ENCODE measurements at regions of chr7 and their contacts with region 1.

Region 1: DNA sequence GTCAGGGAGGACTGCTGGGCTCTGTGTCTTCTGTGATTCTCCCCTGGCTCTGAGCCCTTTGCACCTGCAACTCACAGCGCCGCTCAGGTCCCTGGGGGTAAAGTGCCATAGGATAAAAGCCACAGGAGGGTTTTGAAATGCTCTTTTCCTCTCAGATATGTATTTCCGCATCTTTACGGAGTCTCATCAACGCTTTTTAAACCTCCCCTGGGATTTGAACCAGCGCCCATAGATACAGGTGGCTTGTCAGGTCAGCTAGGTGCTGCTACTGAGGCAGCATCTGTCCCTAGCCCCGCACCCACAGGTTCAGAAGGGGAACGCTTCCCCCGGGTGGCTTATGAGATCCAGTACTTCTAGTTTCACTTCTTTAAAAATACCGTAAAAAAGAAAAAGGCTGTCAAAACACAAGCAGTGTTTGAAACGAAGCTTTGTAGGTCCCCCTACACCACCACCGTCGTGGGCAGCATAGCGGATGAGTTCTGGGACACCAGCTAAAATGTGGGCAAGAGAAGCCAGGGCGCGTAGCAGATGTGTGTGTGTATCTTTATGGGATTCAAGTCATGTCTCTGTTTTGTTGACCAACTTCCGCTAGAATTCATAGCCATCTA is 173.5 kb downstream of the CUX1 start:
- DNase-seq: no peak
- ATAC-seq: no peak
- H3K4me3 ChIP-seq: no peak overlapping the region
- H3K27ac ChIP-seq: no peak overlapping the region
- H3K4me1 ChIP-seq: peaks cover 7% of the 10 kb centered on the region; the same call in 1 of the 2 replicates
- H3K27me3 ChIP-seq: no peaks in the 10 kb centered on the region
- CTCF ChIP-seq: no peak
- POLR2A ChIP-seq: no peak
- RAD21 ChIP-seq: no peak

Region 2: DNA sequence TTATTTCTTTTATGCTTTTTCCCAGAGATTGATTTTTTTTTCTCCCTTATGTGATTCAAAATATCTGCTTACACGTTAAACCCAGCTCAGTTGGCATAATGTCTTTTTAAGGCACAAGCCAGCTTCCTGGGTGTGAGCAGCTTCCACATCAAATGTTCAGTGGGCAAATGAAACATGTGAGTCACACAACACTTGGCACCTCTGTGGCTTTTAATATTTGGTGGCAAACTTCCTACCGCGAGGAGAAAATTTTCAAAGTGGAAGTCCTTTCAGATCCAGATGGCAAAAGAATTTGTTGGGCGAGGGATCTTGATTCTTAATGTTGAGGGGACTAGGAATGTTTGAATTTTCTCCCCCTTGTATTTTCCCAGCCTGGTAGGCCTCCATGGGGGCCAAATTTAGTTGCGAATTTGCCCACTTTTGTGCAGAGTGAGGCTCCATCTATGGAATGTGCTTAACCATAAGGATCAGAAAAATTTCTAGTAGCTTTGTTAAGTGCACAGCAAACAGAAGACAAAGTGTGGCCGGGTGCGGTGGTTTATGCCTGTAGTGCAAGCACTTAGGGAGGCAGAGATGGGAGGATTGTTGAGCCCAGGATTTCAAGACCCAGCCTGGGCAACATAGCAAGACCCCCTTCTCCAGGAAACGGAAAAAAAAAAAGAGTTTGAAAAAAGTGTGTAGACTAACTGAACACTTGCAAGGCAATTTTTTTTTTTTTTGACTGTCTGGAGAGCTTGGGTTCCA is 142.5 kb before region 1 on chr7:
- CTCF ChIA-PET with region 1: no interaction called
- POLR2A ChIA-PET with region 1: no interaction called
- dilution Hi-C with region 1: no loop called
- in situ Hi-C with region 1: no loop called
- intact Hi-C with region 1: no loop called
- DNase-seq: no peak
- ATAC-seq: no peak
- H3K4me3 ChIP-seq: no peak overlapping the region
- H3K27ac ChIP-seq: no peak overlapping the region
- H3K4me1 ChIP-seq: peaks cover 2% of the 10 kb centered on the region; the same call in 1 of the 2 replicates
- H3K27me3 ChIP-seq: no peaks in the 10 kb centered on the region
- CTCF ChIP-seq: no peak
- POLR2A ChIP-seq: no peak
- RAD21 ChIP-seq: no peak

Region 3: GRCh38 chr7:101976411-101976810 is 14.5 kb before region 1 on chr7:
- CTCF ChIA-PET with region 1: interaction called, 4 read pairs
- POLR2A ChIA-PET with region 1: interaction called, 19 read pairs
- dilution Hi-C with region 1: no loop called
- in situ Hi-C with region 1: no loop called
- intact Hi-C with region 1: no loop called
- DNase-seq: no peak
- ATAC-seq: no peak
- H3K4me3 ChIP-seq: no peak overlapping the region
- H3K27ac ChIP-seq: no peak overlapping the region
- H3K4me1 ChIP-seq: no peaks in the 10 kb centered on the region
- H3K27me3 ChIP-seq: no peaks in the 10 kb centered on the region
- CTCF ChIP-seq: no peak
- POLR2A ChIP-seq: no peak
- RAD21 ChIP-seq: no peak

Region 4: DNA sequence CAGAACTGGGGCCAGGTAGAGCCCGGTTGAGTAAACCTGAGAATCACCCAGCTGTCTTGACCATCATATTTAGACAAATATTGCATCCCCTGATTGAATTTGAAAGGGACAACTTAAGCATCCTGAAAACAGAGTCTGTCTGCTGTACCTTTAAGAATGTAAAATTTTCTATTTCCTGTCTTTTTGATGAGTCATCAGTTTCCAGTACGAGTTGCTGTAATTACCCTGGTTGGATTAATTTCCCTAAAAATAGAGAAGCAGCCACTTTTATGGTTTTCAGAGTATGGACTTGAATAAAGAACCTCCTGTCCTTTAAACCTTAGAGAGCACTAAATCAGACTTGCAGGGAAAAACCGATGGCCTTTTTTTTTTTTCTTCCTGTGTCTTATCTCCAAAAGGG is 131.1 kb after region 1 on chr7:
- CTCF ChIA-PET with region 1: no interaction called
- POLR2A ChIA-PET with region 1: no interaction called
- dilution Hi-C with region 1: no loop called
- in situ Hi-C with region 1: no loop called
- intact Hi-C with region 1: no loop called
- DNase-seq: peak; percentile 61
- ATAC-seq: no peak
- H3K4me3 ChIP-seq: no peak overlapping the region
- H3K27ac ChIP-seq: peak overlapping the region; percentile 99
- H3K4me1 ChIP-seq: peaks cover 37% of the 10 kb centered on the region
- H3K27me3 ChIP-seq: no peaks in the 10 kb centered on the region
- CTCF ChIP-seq: no peak
- POLR2A ChIP-seq: no peak
- RAD21 ChIP-seq: no peak

Region 5: DNA sequence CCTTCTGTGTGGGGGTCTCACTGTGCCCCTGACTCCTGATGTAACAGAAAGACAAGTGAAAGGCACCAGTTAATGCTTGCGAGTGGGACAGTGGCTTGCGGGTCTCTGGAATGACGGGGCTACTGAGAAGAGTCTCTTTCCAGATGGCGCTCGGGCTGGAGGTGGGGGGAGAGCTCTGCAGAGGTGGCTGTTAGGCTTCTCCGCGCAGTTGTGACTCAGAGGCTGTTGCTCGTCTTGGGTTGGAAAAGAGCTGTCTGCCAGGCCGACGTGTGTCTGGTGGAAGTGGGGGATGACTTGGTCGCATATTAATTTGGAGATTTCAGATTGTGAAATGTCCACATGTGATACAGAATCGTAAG is 267.8 kb after region 1 on chr7:
- CTCF ChIA-PET with region 1: no interaction called
- POLR2A ChIA-PET with region 1: no interaction called
- dilution Hi-C with region 1: no loop called
- in situ Hi-C with region 1: no loop called
- intact Hi-C with region 1: no loop called
- DNase-seq: peak; percentile 15
- ATAC-seq: no peak
- H3K4me3 ChIP-seq: no peak overlapping the region
- H3K27ac ChIP-seq: no peak overlapping the region
- H3K4me1 ChIP-seq: no peaks in the 10 kb centered on the region
- H3K27me3 ChIP-seq: no peaks in the 10 kb centered on the region
- CTCF ChIP-seq: no peak
- POLR2A ChIP-seq: no peak
- RAD21 ChIP-seq: no peak